GM12878 (cell line): ENCODE measurements at regions of chrX and their contacts with region 1.

Region 1: GRCh38 chrX:30851449-30851848 is 37.6 kb downstream of the TAB3 start:
- DNase-seq: no peak
- ATAC-seq: no peak
- H3K4me3 ChIP-seq: no peak overlapping the region
- H3K27ac ChIP-seq: no peak overlapping the region
- H3K4me1 ChIP-seq: no peaks in the 10 kb centered on the region
- H3K27me3 ChIP-seq: no peaks in the 10 kb centered on the region
- CTCF ChIP-seq: no peak
- EP300 ChIP-seq: no peak
- POLR2A ChIP-seq: no peak
- RAD21 ChIP-seq: no peak

Region 2: DNA sequence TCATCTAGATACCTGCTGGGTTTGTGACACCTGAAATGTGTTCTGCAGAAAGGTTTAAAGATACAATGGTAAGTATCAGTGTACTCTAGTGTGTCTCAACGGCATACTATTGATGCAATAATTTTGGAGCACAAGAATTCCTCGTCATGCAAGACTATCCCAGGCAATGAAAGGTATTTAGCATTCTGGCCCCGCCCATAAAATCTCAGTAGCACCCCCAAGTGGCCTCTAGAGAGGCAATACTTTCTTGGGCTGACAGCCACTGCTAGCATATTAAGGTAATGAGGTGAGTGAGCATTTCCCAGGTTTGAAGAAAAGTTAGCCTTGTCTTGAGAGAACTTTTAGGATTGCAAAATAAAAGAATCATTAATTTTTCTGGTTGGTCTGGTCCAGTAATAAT is 13.6 kb after region 1 on chrX:
- CTCF ChIA-PET with region 1: interaction called, 11 read pairs
- POLR2A ChIA-PET with region 1: interaction called, 3 read pairs
- RAD21 ChIA-PET with region 1: no interaction called
- SMC1A ChIA-PET with region 1: interaction called, 4 read pairs
- in situ Hi-C with region 1: no loop called
- intact Hi-C with region 1: no loop called
- DNase-seq: no peak
- ATAC-seq: peak; percentile 82
- H3K4me3 ChIP-seq: no peak overlapping the region
- H3K27ac ChIP-seq: no peak overlapping the region
- H3K4me1 ChIP-seq: no peaks in the 10 kb centered on the region
- H3K27me3 ChIP-seq: no peaks in the 10 kb centered on the region
- CTCF ChIP-seq: peak; percentile 24 to 36 (median 29); a peak in 4 of 6 replicates
- EP300 ChIP-seq: no peak
- POLR2A ChIP-seq: no peak
- RAD21 ChIP-seq: 0 out of 2 replicates have a peak, but pooled peaks have one; percentile 9